Activated CD4-positive, alpha-beta T cell treated with anti-CD3 and anti-CD28 coated beads, Interleukin-2, amount 10 ng/mL, durations not matched to agents 24 days and 14 days (primary cell): ENCODE measurements at regions of chr2 and their contacts with region 1.

Region 1: DNA sequence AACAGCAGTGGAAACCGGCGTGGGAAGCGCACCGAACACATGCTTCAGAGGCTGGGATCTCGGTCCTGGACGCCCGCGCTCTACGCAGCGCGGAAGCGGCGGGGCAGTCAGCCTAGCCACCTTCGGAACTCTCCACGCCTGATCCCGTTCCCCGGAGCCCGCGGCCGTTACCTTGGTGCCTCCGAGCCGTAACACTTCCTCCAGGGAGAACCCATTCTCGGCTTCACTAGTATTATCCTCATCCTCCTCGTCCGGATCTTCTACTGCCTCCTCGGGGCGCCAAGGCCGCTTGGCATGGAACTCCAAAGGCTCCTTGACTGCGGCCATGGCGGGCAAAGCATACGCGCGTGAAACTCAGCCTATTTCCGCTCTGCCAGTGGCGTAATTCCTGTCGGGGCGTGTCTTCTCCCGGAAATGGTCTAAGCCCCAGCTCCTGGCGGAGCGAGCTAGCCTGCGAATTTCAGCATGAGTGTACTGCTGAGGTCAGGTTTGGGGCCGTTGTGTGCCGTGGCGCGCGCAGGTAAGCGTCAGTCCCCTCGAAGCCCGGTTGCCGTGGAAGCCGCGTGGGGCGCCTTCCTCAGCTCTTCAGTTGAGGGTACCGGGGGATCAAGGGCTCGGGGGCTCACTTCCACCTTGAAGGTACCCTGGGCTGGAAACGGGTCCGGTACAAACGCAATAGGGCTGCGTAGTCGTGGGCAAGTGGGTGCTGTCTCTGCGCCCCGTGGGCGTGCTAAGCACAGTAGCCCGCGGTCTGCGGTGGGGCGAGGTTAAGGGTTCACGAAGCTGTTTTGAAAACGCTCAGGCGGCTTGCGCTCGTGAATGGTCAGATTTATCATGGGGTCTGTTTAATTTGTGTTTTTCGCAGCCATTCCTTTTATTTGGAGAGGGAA is at the starts of genes CEBPZ and NDUFAF7:
- DNase-seq: peak; percentile 96
- H3K4me3 Mint-ChIP-seq: no peak within 1 kb of the TSS
- H3K27ac Mint-ChIP-seq: no peak within 1 kb of the TSS
- H3K4me1 Mint-ChIP-seq: peaks cover 16% of the 10 kb centered on the region
- H3K27me3 Mint-ChIP-seq: no peaks in the 10 kb centered on the region
- total RNA-seq, gene CEBPZ: 63.2 and 68.2 TPM in 2 replicates
- total RNA-seq, gene NDUFAF7: 24.3 and 28.9 TPM in 2 replicates

Region 2: DNA sequence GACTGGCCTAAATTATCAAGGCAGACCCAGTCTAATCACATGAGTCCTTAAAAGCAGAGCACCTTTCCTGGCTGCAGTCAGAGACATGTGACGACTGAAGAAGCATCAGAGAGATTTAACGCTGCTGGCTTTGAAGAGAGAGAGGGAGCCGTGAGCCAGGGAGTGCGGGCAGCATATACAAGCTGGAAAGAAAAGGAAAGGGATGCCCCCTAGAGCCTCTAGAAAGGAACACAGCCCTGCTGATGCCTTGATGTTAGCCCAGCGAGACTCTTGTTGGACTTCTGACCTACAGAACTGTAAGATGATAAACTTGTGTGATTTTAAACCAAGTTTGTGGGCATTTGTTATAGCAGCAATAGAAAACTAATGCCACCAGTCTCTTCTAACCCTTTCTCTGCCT is 205.4 kb before region 1 on chr2:
- intact Hi-C with region 1: no loop called
- DNase-seq: no peak
- H3K4me3 Mint-ChIP-seq: no peak overlapping the region
- H3K27ac Mint-ChIP-seq: no peak overlapping the region
- H3K4me1 Mint-ChIP-seq: no peaks in the 10 kb centered on the region
- H3K27me3 Mint-ChIP-seq: no peaks in the 10 kb centered on the region

Region 3: GRCh38 chr2:37068686-37069085 is 162.8 kb before region 1 on chr2:
- intact Hi-C with region 1: no loop called
- DNase-seq: no peak
- H3K4me3 Mint-ChIP-seq: no peak overlapping the region
- H3K27ac Mint-ChIP-seq: no peak overlapping the region
- H3K4me1 Mint-ChIP-seq: peaks cover 2% of the 10 kb centered on the region
- H3K27me3 Mint-ChIP-seq: no peaks in the 10 kb centered on the region

Region 4: GRCh38 chr2:37083873-37084794 is 147.4 kb before region 1 on chr2 and contains the starts of genes GPATCH11 and HEATR5B:
- intact Hi-C with region 1: loop called (anchors 2 kb)
- DNase-seq: peak; percentile 98
- H3K4me3 Mint-ChIP-seq: no peak within 1 kb of the TSS
- H3K27ac Mint-ChIP-seq: no peak within 1 kb of the TSS
- H3K4me1 Mint-ChIP-seq: peaks cover 36% of the 10 kb centered on the region
- H3K27me3 Mint-ChIP-seq: no peaks in the 10 kb centered on the region
- total RNA-seq, gene GPATCH11: 13.8 and 15.7 TPM in 2 replicates
- total RNA-seq, gene HEATR5B: 14.7 and 14.8 TPM in 2 replicates

Region 5: DNA sequence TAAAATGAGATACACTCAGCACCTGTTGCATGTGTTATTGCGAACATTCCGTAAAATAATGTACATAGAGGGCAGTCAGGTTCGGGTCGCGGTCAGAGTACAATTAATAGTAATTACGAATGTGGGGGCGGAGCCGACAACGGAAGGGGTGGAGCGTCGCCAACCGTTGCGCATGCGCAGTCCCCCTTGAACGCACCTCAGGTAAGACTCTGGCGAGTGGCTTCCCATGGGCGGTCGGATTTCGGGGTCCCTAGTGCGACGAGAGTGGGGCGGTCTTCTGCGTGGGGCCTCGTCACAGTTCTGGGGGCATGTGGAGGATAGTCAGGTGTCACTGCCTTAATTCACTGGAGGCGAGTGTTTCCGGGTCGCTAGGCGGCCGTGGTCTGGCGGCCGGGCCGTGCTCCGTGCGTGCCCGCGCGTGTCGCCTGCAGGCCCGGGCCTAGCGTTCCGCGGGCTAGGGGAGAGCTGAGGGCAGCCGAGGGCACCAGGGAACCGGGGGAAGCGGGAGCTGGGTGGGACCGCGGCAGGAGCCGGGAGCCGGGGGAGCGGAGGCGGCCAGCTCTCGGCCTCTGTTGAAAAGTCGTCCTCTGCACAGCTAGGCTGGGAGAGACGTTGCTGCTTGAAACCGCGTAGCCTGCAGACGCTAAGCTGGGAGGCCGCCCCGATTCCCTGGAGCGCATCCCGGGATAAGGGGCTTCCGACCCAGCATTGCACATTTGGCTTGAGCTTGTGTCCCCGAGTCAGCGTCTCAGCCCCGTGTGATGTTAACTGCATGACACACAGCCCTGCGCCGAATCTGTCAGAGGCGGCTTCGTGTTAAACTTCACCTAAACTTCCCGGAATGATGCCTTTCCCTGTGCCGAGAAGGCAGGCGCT is 34.9 kb before region 1 on chr2 and contains the start of gene CEBPZOS:
- intact Hi-C with region 1: loop called (anchors 1 kb)
- DNase-seq: peak; percentile 96
- H3K4me3 Mint-ChIP-seq: peak within 1 kb of the TSS; percentile 92
- H3K27ac Mint-ChIP-seq: peak within 1 kb of the TSS; percentile 98
- H3K4me1 Mint-ChIP-seq: peaks cover 19% of the 10 kb centered on the region
- H3K27me3 Mint-ChIP-seq: peaks cover 3% of the 10 kb centered on the region
- total RNA-seq, gene CEBPZOS: 43.4 and 46.6 TPM in 2 replicates

Region 6: DNA sequence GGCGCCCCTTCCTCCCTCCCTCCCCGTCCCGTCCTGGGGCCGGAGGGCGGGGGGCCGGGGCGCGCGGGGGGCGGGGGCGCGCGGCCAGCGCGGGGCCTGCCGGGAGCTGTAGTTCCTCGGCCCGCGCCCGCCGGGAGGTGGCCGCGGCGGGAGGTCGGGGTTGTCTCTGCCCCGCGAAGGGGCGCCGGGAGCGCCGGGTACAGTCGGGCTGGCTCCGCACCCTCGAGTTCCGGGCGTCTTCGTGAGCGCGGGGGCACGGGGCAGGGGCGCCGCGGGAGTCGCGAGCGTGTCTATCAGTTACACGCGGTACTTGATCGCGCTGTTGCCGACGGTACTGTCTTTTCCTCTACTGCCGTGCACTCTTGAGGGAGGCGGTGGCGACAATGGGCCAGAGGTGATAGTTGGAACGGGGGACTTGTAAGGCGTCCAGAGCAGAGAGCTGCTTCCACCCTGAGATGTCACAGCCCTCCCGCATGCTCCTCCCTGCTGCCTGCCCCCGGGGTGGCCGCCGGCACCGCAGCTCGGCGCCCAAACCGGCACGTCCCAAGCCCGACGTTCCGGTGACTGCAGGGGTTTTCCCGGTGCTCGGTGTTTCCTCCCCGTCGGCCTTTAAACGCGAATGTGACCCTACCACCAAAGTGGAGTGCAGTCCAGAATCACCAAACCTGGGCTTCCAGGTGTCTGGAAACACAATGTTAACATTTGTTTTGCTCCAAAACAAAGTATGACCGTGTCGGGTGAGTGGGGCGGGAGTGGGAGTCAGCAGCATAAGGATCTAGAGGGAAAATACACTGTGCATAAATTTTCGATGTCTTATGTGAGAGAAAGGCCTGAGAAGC is 93.5 kb after region 1 on chr2 and contains the start of gene PRKD3:
- intact Hi-C with region 1: loop called (anchors 1 kb)
- DNase-seq: peak; percentile 89
- H3K4me3 Mint-ChIP-seq: peak within 1 kb of the TSS; percentile 95
- H3K27ac Mint-ChIP-seq: peak within 1 kb of the TSS; percentile 92
- H3K4me1 Mint-ChIP-seq: peaks cover 27% of the 10 kb centered on the region
- H3K27me3 Mint-ChIP-seq: peaks cover 48% of the 10 kb centered on the region
- total RNA-seq, gene PRKD3: 20.2 and 21.9 TPM in 2 replicates

Region 7: DNA sequence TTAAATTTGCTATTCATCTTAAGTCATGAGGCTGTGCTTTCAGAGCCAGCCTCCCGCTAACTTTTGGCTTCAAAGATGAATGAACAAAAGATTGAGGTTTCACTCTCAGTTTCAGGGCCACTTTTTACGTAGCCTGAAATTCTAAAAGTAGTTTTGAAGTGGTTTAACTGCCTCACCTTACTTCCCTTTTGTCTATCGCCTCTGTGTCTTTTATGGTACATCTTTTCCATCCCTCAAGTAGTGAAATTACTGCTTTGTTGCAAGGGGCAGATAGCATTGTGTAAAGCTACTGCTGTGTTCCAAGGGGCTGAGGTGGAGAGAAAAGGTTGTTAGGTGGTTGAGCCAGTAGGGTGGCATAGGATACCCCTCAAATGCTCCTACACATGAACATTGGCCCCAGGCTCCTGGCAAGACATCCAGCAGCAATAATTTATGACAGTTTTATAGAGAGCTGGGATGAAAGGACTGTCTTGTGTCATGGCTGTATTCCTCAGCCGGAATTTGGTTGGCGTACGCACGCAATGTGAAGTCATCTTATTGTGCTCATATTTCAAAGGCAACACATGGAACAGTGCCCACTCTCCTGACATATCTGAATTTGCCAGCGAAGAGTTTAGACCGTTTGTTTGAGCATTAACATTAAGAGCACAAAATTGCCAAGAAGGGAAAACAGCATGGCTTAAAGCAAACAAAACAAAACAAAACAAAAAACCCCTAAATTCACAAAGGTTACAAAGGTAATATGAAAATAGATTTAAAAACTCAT is 145.1 kb after region 1 on chr2:
- intact Hi-C with region 1: loop called (anchors 1 kb)
- DNase-seq: peak; percentile 85
- H3K4me3 Mint-ChIP-seq: peak overlapping the region; percentile 77
- H3K27ac Mint-ChIP-seq: peak overlapping the region; percentile 89
- H3K4me1 Mint-ChIP-seq: peaks cover 32% of the 10 kb centered on the region
- H3K27me3 Mint-ChIP-seq: peaks cover 49% of the 10 kb centered on the region

Region 8: DNA sequence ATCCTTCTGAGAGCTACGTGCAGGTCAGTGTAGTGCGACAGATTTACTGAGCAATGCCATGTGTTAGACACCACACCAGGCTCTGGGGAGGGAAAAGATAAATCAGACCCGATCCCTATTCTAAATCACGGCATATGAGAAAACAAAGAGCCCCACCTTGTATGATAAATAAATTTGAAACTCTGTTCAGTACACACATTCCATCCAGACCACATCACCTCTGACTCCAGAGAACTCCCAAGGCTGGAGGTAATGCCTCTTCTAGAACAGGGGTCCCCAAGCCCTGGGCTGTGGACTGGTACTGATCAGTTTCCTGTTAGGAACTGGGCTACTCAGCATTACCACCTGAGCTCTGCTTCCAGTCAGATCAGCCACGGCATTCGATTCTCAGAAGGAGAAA is 190.2 kb after region 1 on chr2:
- intact Hi-C with region 1: no loop called
- DNase-seq: no peak
- H3K4me3 Mint-ChIP-seq: no peak overlapping the region
- H3K27ac Mint-ChIP-seq: no peak overlapping the region
- H3K4me1 Mint-ChIP-seq: no peaks in the 10 kb centered on the region
- H3K27me3 Mint-ChIP-seq: peaks cover 9% of the 10 kb centered on the region

Region 9: GRCh38 chr2:37623971-37624900 is 392.8 kb after region 1 on chr2:
- intact Hi-C with region 1: no loop called
- DNase-seq: no peak
- H3K4me3 Mint-ChIP-seq: peak overlapping the region; percentile 49
- H3K27ac Mint-ChIP-seq: peak overlapping the region; percentile 71
- H3K4me1 Mint-ChIP-seq: peaks cover 34% of the 10 kb centered on the region
- H3K27me3 Mint-ChIP-seq: peaks cover 5% of the 10 kb centered on the region

Region 10: DNA sequence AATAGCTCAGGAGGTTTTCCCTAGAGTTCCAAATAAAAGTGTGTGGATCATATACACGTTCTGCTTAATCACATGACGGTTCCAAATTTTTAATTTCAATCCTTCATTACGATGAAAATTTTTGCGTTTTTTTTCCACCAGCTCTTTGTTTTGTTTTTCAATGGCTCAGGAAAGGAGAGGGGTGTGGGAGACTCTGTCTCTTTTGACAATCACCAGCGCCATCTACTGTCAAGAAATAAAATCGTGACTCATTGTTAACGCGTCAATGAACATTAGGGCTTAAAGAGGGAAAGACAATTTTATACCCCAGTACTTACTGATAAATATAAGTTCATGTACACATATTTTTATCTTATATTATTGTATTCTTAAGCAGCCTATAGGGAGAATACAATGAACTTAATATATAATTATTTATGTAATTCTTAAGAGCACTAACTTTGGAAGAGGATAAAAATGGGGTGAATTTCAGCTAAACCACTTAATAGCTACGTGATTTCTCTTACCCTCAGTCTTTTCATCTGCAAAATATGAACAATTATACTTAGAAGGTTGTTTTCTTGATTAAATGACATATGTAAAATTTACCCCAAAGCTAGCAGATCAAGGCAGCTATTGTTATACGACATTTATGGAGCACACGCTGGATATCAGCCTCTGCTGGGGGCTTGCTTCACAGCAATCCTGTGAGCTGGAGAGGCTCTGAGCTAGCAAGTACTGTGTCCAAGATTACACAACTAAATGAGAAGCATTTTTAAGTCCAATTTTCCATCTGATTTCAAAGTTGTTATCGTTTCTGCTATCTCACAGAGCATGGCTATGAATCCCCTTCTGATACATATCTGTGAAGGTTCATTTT is 646.2 kb after region 1 on chr2:
- intact Hi-C with region 1: loop called (anchors 10 kb)
- DNase-seq: peak; percentile 83
- H3K4me3 Mint-ChIP-seq: no peak overlapping the region
- H3K27ac Mint-ChIP-seq: no peak overlapping the region
- H3K4me1 Mint-ChIP-seq: peaks cover 26% of the 10 kb centered on the region
- H3K27me3 Mint-ChIP-seq: peaks cover 25% of the 10 kb centered on the region